AG04450 (cell line): ENCODE measurements at regions of chr9 and their contacts with region 1.

Region 1: GRCh38 chr9:76443892-76444581 is 14.9 kb upstream of the GCNT1 start:
- DNase-seq: no peak
- H3K4me3 ChIP-seq: no peak overlapping the region
- H3K27ac ChIP-seq: no peak overlapping the region
- H3K27me3 ChIP-seq: no peaks in the 10 kb centered on the region
- CTCF ChIP-seq: no peak

Region 2: GRCh38 chr9:76458903-76459690 is 15.1 kb after region 1 on chr9 and contains the start of gene GCNT1:
- CTCF ChIA-PET with region 1: interaction called, 10 read pairs
- POLR2A ChIA-PET with region 1: no interaction called
- DNase-seq: no peak
- H3K4me3 ChIP-seq: peak within 1 kb of the TSS; percentile 86
- H3K27ac ChIP-seq: peak within 1 kb of the TSS; percentile 47
- H3K27me3 ChIP-seq: no peaks in the 10 kb centered on the region
- CTCF ChIP-seq: peak; percentile 29; the same call in 1 of the 2 replicates
- polyA plus RNA-seq, gene GCNT1: 6.9 and 7.6 TPM in 2 replicates

Region 3: DNA sequence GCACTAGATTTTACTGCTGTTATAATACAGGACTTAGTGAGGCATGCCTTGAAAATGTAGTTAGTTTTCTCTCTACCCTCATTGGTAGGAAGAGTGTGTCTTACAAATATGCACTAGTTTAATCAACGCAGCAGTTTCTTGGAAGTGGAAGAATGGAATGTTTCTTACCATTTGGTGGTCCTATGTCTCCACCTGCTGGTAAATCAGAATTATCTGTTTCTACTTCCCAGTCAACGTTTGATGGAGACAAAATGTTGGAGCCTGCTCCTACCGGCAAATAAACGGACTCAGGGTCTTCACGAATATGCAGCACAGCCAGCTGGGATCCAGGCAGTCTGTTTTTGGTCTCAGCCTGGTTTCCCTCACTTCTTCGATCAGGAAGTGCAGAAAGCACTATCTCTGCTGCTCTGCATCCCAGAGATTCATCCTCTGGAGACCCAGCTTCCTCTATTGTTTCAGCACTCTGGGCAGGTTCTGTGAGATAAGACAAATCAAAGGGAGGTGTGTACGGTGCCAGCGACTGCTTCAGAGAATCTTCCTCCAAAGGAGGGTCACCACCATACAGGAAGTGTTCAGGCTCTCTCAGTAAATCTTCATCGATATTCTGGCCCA is 260.7 kb after region 1 on chr9:
- CTCF ChIA-PET with region 1: interaction called, 42 read pairs
- POLR2A ChIA-PET with region 1: no interaction called
- DNase-seq: peak; percentile 82
- H3K4me3 ChIP-seq: no peak overlapping the region
- H3K27ac ChIP-seq: no peak overlapping the region
- H3K27me3 ChIP-seq: peaks cover 14% of the 10 kb centered on the region
- CTCF ChIP-seq: peak; percentile 68